ENCODE measurements at regions of chr10 and their contacts with region 1.

Region 1: GRCh38 chr10:123380497-123381085 is 226.4 kb downstream of the BUB3 start:
- DNase-seq: peak; percentile 33
- H3K4me3 Mint-ChIP-seq: no peak overlapping the region
- H3K27ac Mint-ChIP-seq: no peak overlapping the region
- H3K4me1 Mint-ChIP-seq: peaks cover 18% of the 10 kb centered on the region
- H3K27me3 Mint-ChIP-seq: no peaks in the 10 kb centered on the region
- CTCF ChIP-seq: peak; percentile 41

Region 2: GRCh38 chr10:123144697-123145541 is 235.7 kb before region 1 on chr10:
- CTCF ChIA-PET with region 1: interaction called, 15 read pairs
- POLR2A ChIA-PET with region 1: interaction called, 3 read pairs
- intact Hi-C with region 1: loop called (anchors 2 kb)
- DNase-seq: no peak
- H3K4me3 Mint-ChIP-seq: no peak overlapping the region
- H3K27ac Mint-ChIP-seq: no peak overlapping the region
- H3K4me1 Mint-ChIP-seq: peaks cover 6% of the 10 kb centered on the region
- H3K27me3 Mint-ChIP-seq: peaks cover 35% of the 10 kb centered on the region
- CTCF ChIP-seq: no peak

Region 3: DNA sequence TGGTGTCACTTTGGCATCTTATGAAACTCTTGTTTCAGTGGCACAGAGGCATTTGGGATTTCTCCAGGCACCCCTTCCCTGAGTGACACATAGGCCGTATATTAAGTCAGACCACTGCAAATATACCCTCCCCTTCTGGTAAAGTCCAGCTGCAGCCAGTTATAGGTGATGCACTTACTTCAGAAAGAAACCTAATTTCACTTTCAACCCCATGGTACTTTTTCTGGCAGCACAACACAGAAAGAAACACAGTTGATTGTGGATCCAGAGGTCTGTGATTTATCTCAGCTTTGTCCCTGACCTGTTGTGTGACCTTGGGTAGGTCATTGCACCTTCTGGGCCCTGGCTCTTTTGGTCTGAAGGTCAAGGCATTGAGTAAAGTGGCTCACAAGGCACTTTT is 53.1 kb before region 1 on chr10:
- CTCF ChIA-PET with region 1: no interaction called
- POLR2A ChIA-PET with region 1: no interaction called
- intact Hi-C with region 1: no loop called
- DNase-seq: no peak
- H3K4me3 Mint-ChIP-seq: no peak overlapping the region
- H3K27ac Mint-ChIP-seq: no peak overlapping the region
- H3K4me1 Mint-ChIP-seq: no peaks in the 10 kb centered on the region
- H3K27me3 Mint-ChIP-seq: no peaks in the 10 kb centered on the region
- CTCF ChIP-seq: no peak

Region 4: GRCh38 chr10:123559066-123559822 is 178.7 kb after region 1 on chr10:
- CTCF ChIA-PET with region 1: interaction called, 29 read pairs
- POLR2A ChIA-PET with region 1: interaction called, 3 read pairs
- intact Hi-C with region 1: loop called (anchors 1 kb)
- DNase-seq: peak; percentile 71
- H3K4me3 Mint-ChIP-seq: no peak overlapping the region
- H3K27ac Mint-ChIP-seq: no peak overlapping the region
- H3K4me1 Mint-ChIP-seq: no peaks in the 10 kb centered on the region
- H3K27me3 Mint-ChIP-seq: no peaks in the 10 kb centered on the region
- CTCF ChIP-seq: peak; percentile 97

Region 5: GRCh38 chr10:123614888-123615287 is 234.3 kb after region 1 on chr10:
- CTCF ChIA-PET with region 1: no interaction called
- POLR2A ChIA-PET with region 1: no interaction called
- intact Hi-C with region 1: no loop called
- DNase-seq: peak; percentile 68
- H3K4me3 Mint-ChIP-seq: no peak overlapping the region
- H3K27ac Mint-ChIP-seq: no peak overlapping the region
- H3K4me1 Mint-ChIP-seq: no peaks in the 10 kb centered on the region
- H3K27me3 Mint-ChIP-seq: peaks cover 23% of the 10 kb centered on the region
- CTCF ChIP-seq: no peak

Measured in MCF 10A (cell line).